IMR-90 (cell line): ENCODE measurements at regions of chr11 and their contacts with region 1.

Region 1: GRCh38 chr11:75248690-75249268 is 8.2 kb downstream of the TPBGL start:
- DNase-seq: peak; percentile 87
- ATAC-seq: peak; percentile 99
- H3K4me3 ChIP-seq: no peak overlapping the region
- H3K27ac ChIP-seq: no peak overlapping the region
- H3K4me1 ChIP-seq: no peaks in the 10 kb centered on the region
- H3K27me3 ChIP-seq: peaks cover 38% of the 10 kb centered on the region
- CTCF ChIP-seq: peak; percentile 100
- POLR2A ChIP-seq: no peak
- RAD21 ChIP-seq: peak; percentile 98

Region 2: DNA sequence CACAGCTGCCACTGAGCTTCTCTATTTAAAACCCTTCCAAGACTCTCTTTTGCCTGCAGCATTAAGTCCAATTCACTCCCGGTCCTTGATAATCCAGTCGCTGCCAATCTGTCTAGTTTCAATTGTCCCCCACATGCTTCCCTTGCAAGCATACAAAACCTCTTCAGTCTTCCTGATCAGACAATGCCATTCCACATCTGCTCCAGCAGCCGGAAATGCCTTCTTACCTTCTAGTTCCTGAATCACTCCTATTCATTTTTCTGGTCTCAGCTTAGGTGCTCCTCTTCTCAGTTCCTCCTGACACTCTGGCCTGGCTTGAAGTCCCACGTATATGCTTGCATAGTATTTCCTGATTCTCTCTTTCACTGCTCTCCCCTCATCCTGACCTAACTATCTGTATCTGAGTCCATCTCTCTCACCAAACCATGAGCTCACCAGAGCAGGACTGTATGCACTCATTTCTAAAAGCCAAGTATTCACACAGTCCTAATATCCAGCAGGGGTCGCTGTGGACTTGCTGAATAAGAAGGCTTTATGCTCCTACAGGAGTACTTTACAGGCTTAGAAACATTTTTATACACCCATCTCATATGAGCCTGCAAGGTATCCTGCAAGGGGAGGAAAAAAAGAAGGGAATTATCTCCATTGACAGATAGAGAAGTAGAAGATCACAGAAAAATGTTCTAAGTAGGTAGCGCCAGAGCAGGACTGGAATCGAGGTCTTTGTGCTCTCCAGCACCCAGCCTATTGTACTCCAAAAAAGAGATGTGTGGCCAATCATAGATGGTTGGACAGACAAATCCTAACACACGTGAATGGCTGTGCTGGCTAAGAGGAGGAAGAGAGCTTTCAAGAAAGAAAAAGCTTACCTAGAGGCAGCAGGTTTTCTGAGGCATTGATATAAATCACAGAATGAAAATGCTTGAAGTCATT is 319.1 kb before region 1 on chr11:
- CTCF ChIA-PET with region 1: interaction called, 4 read pairs
- POLR2A ChIA-PET with region 1: no interaction called
- dilution Hi-C with region 1: no loop called
- in situ Hi-C with region 1: loop called (anchors 5 kb)
- intact Hi-C with region 1: loop called (anchors 1 kb)
- DNase-seq: peak; percentile 95
- ATAC-seq: peak; percentile 81
- H3K4me3 ChIP-seq: no peak overlapping the region
- H3K27ac ChIP-seq: no peak overlapping the region
- H3K4me1 ChIP-seq: peaks cover 14% of the 10 kb centered on the region
- H3K27me3 ChIP-seq: no peaks in the 10 kb centered on the region
- CTCF ChIP-seq: peak; percentile 93
- POLR2A ChIP-seq: no peak
- RAD21 ChIP-seq: peak; percentile 92

Region 3: DNA sequence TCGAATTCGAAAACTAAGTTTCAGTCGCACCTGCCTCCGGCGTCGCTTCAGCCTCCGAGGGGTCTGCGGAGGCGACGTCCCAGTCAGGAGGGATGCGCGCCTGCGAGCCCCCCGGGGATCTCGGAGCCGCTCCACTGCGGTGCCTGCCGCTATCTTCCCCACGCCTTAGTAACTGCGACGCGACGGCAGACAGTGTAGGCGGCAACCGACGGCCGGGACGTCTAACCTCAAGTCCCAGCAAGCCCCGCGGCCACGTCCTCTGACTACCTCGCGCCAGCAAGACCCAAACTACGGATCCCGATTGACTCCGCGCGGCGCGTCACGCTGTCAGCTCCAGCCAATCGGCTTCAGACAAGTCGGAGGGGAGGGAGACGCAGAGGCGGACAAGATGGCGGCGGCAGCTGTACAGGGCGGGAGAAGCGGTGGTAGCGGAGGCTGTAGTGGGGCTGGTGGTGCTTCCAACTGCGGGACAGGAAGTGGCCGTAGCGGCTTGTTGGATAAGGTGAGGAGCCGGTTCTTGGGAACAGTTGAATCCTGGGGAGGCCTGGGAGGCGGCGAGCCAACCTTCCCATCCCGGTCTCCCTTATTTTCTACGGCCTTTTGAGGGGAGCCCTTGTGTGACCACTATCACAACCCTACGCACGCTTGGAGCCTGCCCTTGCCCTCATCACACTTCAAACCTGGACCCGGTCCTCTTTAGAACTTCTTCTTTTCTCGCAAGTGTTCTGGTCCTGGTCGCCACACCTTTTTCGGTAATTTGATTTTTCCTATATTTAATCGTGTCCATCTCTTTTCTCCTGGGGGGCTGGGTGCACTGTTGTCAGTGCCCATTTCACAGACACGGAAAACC is 299.7 kb before region 1 on chr11 and contains the starts of genes SPCS2 and XRRA1:
- CTCF ChIA-PET with region 1: no interaction called
- POLR2A ChIA-PET with region 1: no interaction called
- dilution Hi-C with region 1: no loop called
- in situ Hi-C with region 1: no loop called
- intact Hi-C with region 1: loop called (anchors 5 kb)
- DNase-seq: peak; percentile 99
- ATAC-seq: peak; percentile 98
- H3K4me3 ChIP-seq: peak within 1 kb of the TSS; percentile 88
- H3K27ac ChIP-seq: peak within 1 kb of the TSS; percentile 79
- H3K4me1 ChIP-seq: peaks cover 3% of the 10 kb centered on the region
- H3K27me3 ChIP-seq: no peaks in the 10 kb centered on the region
- CTCF ChIP-seq: no peak
- POLR2A ChIP-seq: peak; percentile 90
- RAD21 ChIP-seq: no peak
- total RNA-seq, gene SPCS2: 13.3 and 15.4 TPM in 2 replicates
- total RNA-seq, gene XRRA1: 5.0 and 6.3 TPM in 2 replicates

Region 4: GRCh38 chr11:75022759-75023396 is 225.9 kb before region 1 on chr11:
- CTCF ChIA-PET with region 1: interaction called, 4 read pairs
- POLR2A ChIA-PET with region 1: interaction called, 3 read pairs
- dilution Hi-C with region 1: no loop called
- in situ Hi-C with region 1: loop called (anchors 5 kb)
- intact Hi-C with region 1: loop called (anchors 1 kb)
- DNase-seq: peak; percentile 84
- ATAC-seq: peak; percentile 99
- H3K4me3 ChIP-seq: no peak overlapping the region
- H3K27ac ChIP-seq: no peak overlapping the region
- H3K4me1 ChIP-seq: no peaks in the 10 kb centered on the region
- H3K27me3 ChIP-seq: peaks cover 3% of the 10 kb centered on the region
- CTCF ChIP-seq: peak; percentile 99
- POLR2A ChIP-seq: no peak
- RAD21 ChIP-seq: peak; percentile 98

Region 5: GRCh38 chr11:75147875-75148263 is 100.9 kb before region 1 on chr11:
- CTCF ChIA-PET with region 1: interaction called, 8 read pairs
- POLR2A ChIA-PET with region 1: no interaction called
- dilution Hi-C with region 1: no loop called
- in situ Hi-C with region 1: loop called (anchors 5 kb)
- intact Hi-C with region 1: loop called (anchors 1 kb)
- DNase-seq: no peak
- ATAC-seq: no peak
- H3K4me3 ChIP-seq: no peak overlapping the region
- H3K27ac ChIP-seq: no peak overlapping the region
- H3K4me1 ChIP-seq: peaks cover 2% of the 10 kb centered on the region; the same call in 1 of the 2 replicates
- H3K27me3 ChIP-seq: peaks cover 53% of the 10 kb centered on the region
- CTCF ChIP-seq: no peak
- POLR2A ChIP-seq: no peak
- RAD21 ChIP-seq: no peak

Region 6: DNA sequence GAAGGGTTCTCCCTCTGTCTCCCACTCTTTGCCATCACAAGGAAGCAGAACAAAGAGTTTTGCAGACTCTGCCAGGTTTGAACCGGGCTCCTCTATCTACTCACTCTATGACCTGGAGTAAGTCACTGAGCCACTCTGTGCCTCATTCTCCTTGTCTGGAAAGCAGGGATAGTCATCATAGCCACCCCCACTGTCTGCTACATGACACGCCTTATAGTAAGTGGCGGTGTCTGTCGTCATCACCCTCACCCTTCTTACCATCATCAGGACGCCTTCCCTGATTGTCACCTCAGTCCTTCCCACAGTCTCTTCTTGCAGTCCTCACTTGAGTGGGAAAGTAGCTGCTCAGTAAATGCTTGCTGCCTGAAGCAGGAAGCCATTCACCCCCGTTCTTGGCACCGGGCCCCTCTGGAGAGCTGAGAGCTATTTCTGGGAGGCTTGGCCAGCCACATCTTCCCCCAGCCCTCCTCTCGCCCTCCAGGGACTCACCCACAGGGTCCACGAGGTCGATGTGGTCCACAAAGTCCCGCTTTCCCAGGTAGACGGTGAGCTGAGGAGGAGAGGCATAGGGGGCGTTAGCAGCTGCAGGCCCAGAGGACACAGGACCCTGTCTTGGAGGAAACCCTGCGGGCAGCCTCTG is 38.2 kb after region 1 on chr11:
- CTCF ChIA-PET with region 1: no interaction called
- POLR2A ChIA-PET with region 1: no interaction called
- dilution Hi-C with region 1: no loop called
- in situ Hi-C with region 1: no loop called
- intact Hi-C with region 1: no loop called
- DNase-seq: peak; percentile 37
- ATAC-seq: no peak
- H3K4me3 ChIP-seq: no peak overlapping the region
- H3K27ac ChIP-seq: no peak overlapping the region
- H3K4me1 ChIP-seq: no peaks in the 10 kb centered on the region
- H3K27me3 ChIP-seq: no peaks in the 10 kb centered on the region
- CTCF ChIP-seq: no peak
- POLR2A ChIP-seq: no peak
- RAD21 ChIP-seq: no peak

Region 7: DNA sequence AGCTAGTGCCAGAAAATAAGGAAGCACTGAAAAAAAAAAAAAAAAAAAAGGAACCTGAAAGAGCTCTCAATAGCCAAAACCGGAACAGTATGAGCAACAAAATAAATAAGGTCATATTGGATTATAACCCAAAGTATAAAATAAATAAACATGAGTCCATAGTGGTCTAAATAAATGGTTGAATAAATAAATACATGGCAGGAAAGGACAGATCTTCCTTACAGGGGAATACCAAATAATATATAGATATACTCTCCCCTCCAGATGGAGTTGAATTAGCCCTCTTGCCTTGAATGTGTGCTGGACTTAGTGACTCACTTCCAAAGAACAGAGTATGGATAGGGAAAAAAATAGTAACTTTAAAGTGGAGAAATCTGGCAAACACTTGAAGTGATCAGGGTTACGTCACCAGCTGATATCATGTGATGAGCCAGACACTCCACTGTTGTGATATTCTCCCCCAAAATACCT is 117.0 kb after region 1 on chr11:
- CTCF ChIA-PET with region 1: no interaction called
- POLR2A ChIA-PET with region 1: no interaction called
- dilution Hi-C with region 1: no loop called
- in situ Hi-C with region 1: no loop called
- intact Hi-C with region 1: no loop called
- DNase-seq: peak; percentile 84
- ATAC-seq: peak; percentile 85
- H3K4me3 ChIP-seq: no peak overlapping the region
- H3K27ac ChIP-seq: no peak overlapping the region
- H3K4me1 ChIP-seq: peaks cover 4% of the 10 kb centered on the region; the same call in 1 of the 2 replicates
- H3K27me3 ChIP-seq: peaks cover 16% of the 10 kb centered on the region
- CTCF ChIP-seq: no peak
- POLR2A ChIP-seq: no peak
- RAD21 ChIP-seq: no peak